ENCODE measurements at regions of chr10 and their contacts with region 1.

Region 1: GRCh38 chr10:110671788-110672579 is 27.8 kb downstream of the RBM20 start:
- DNase-seq: peak; percentile 86 to 88
- ATAC-seq: peak; percentile 99 to 100
- H3K4me3 ChIP-seq: peak overlapping the region; percentile 59
- H3K27ac ChIP-seq: peak overlapping the region; percentile 76 to 91
- H3K4me1 ChIP-seq: no peaks in the 10 kb centered on the region
- CTCF ChIP-seq: peak; percentile 78
- EP300 ChIP-seq: no peak
- POLR2A ChIP-seq: peak; percentile 33
- RAD21 ChIP-seq: peak; percentile 60 to 67

Region 2: GRCh38 chr10:110629680-110630191 is 42.2 kb before region 1 on chr10:
- CTCF ChIA-PET with region 1: interaction called, 20 read pairs
- POLR2A ChIA-PET with region 1: no interaction called
- DNase-seq: peak in 1 of 2 experiments; percentile 77
- ATAC-seq: peak; percentile 81 to 93
- H3K4me3 ChIP-seq: no peak overlapping the region
- H3K27ac ChIP-seq: peak overlapping the region; percentile 37 to 65; a peak in 4 of 6 replicates
- H3K4me1 ChIP-seq: peaks cover 18% of the 10 kb centered on the region
- CTCF ChIP-seq: no peak
- EP300 ChIP-seq: peak; percentile 15 to 55; a peak in 2 of 5 replicates
- POLR2A ChIP-seq: no peak
- RAD21 ChIP-seq: no peak

Region 3: GRCh38 chr10:110636932-110637557 is 34.9 kb before region 1 on chr10:
- CTCF ChIA-PET with region 1: interaction called, 20 read pairs
- POLR2A ChIA-PET with region 1: interaction called, 6 read pairs
- DNase-seq: no peak
- ATAC-seq: peak; percentile 2 to 13; a peak in 3 of 6 replicates
- H3K4me3 ChIP-seq: no peak overlapping the region
- H3K27ac ChIP-seq: peak overlapping the region; percentile 64 to 71
- H3K4me1 ChIP-seq: peaks cover 49% of the 10 kb centered on the region
- CTCF ChIP-seq: no peak
- EP300 ChIP-seq: no peak
- POLR2A ChIP-seq: no peak
- RAD21 ChIP-seq: no peak

Region 4: DNA sequence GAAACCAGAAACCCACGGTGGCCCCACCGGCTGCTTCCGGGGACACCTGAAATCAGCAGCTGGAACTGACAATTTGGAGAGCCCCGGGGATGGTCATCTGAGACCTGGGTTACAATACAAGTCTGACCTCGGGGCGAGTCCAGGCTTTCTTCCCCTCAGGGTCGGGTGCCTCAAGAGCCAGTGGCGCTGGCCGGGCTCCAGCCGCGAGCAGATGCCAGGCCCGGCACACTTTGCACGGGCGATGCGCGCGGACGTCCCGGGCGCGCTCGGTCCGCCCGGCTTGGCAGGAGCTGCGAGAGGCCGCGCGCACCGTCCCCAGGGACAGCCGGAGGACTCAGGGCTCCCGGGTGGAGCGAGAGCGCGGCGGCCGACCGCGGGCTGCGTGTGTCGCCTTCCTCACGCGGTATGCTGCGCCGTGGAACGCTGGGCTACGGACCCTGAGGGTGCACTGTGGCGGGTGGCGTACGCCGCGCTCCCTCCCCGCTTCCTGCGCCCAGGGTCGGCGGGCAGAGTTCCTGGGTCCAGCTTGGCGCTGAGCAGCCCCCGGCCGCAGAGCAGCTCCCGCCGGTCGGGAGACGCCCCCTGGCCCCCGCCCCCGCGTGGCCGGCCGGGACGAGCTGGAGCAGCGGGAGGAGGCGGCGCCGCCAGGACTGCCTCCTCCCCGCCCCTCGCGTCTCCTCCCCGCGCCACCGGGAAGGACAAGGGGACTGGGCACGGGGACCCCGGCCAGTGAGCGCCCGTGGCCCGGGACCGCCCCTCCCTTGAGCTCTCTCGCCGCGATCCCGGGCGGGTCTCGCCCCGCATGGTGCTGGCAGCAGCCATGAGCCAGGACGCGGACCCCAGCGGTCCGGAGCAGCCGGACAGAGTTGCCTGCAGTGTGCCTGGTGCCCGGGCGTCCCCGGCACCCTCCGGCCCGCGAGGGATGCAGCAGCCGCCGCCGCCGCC is 28.1 kb before region 1 on chr10 and contains the start of gene RBM20:
- CTCF ChIA-PET with region 1: interaction called, 23 read pairs
- POLR2A ChIA-PET with region 1: interaction called, 6 read pairs
- DNase-seq: peak in 1 of 2 experiments; percentile 56
- ATAC-seq: peak; percentile 76 to 86
- H3K4me3 ChIP-seq: peak within 1 kb of the TSS; percentile 69
- H3K27ac ChIP-seq: peak within 1 kb of the TSS; percentile 73 to 93
- H3K4me1 ChIP-seq: peaks cover 63% of the 10 kb centered on the region
- CTCF ChIP-seq: no peak
- EP300 ChIP-seq: no peak
- POLR2A ChIP-seq: peak; percentile 27
- RAD21 ChIP-seq: no peak
- polyA plus RNA-seq, gene RBM20: 1.5 and 2.0 TPM in 2 replicates

Region 5: DNA sequence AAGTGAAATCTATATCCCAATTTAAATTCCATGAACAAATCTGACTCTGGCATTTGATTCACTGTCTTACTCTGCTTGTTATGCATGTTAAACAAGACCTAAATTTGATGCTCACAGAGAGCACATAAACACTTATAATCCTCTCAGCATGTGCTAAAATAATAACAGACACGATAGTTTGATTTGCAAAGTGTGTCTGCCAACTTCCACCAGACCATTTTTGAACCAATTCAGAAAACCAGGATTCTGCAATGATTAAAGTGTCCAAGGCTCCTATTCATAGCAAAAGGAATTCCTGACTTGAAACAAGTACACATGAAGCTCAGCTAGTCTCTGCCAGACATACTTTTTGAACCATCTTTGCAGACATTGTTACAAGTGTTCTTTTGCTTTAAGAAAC is 16.7 kb before region 1 on chr10:
- CTCF ChIA-PET with region 1: interaction called, 23 read pairs
- POLR2A ChIA-PET with region 1: interaction called, 3 read pairs
- DNase-seq: no peak
- ATAC-seq: no peak
- H3K4me3 ChIP-seq: no peak overlapping the region
- H3K27ac ChIP-seq: no peak overlapping the region
- H3K4me1 ChIP-seq: 0 out of 3 replicates have a peak, but pooled peaks cover 12% of the 10 kb centered on the region
- CTCF ChIP-seq: no peak
- EP300 ChIP-seq: no peak
- POLR2A ChIP-seq: no peak
- RAD21 ChIP-seq: no peak

Measured in A549 (cell line).